WTC11 (cell line): ENCODE measurements at regions of chr11 and their contacts with region 1.

Region 1: GRCh38 chr11:25981998-25982397 is 349.9 kb upstream of the ANO3 start:
- DNase-seq: no peak
- ATAC-seq: peak; percentile 90
- H3K4me3 Mint-ChIP-seq: no peak overlapping the region
- H3K27ac Mint-ChIP-seq: no peak overlapping the region
- H3K4me1 Mint-ChIP-seq: no peaks in the 10 kb centered on the region
- H3K27me3 Mint-ChIP-seq: no peaks in the 10 kb centered on the region
- CTCF ChIP-seq: peak; percentile 31; the same call in 1 of the 2 replicates

Region 2: DNA sequence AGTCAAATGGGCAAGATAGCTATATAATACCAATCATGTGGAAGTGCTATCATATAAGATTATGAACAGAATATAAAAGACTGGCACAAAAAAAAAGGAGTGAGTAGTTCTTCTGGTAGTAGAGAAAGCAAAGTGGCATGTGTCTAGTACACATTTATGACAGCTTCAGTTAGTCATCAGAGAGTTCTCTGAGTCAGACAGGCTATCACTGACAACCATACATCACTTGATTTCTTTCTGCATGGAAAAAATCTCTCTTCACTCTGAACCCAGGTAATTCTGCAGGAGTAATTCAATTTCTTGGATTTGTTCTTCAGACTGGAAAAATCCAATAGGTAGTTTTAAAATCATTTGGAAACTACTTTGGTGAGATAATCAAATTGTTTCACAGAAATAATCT is 63.1 kb after region 1 on chr11:
- CTCF ChIA-PET with region 1: no interaction called
- POLR2A ChIA-PET with region 1: no interaction called
- DNase-seq: no peak
- ATAC-seq: no peak
- H3K4me3 Mint-ChIP-seq: no peak overlapping the region
- H3K27ac Mint-ChIP-seq: no peak overlapping the region
- H3K4me1 Mint-ChIP-seq: peaks cover 2% of the 10 kb centered on the region; the same call in 1 of the 2 replicates
- H3K27me3 Mint-ChIP-seq: no peaks in the 10 kb centered on the region
- CTCF ChIP-seq: no peak

Region 3: GRCh38 chr11:26134481-26135355 is 152.7 kb after region 1 on chr11:
- CTCF ChIA-PET with region 1: interaction called, 33 read pairs
- POLR2A ChIA-PET with region 1: interaction called, 4 read pairs
- DNase-seq: no peak
- ATAC-seq: peak; percentile 97
- H3K4me3 Mint-ChIP-seq: no peak overlapping the region
- H3K27ac Mint-ChIP-seq: no peak overlapping the region; the same call in 1 of the 2 replicates
- H3K4me1 Mint-ChIP-seq: peaks cover 8% of the 10 kb centered on the region
- H3K27me3 Mint-ChIP-seq: no peaks in the 10 kb centered on the region
- CTCF ChIP-seq: no peak

Region 4: GRCh38 chr11:26219183-26220117 is 237.5 kb after region 1 on chr11:
- CTCF ChIA-PET with region 1: interaction called, 21 read pairs
- POLR2A ChIA-PET with region 1: no interaction called
- DNase-seq: no peak
- ATAC-seq: no peak
- H3K4me3 Mint-ChIP-seq: no peak overlapping the region
- H3K27ac Mint-ChIP-seq: no peak overlapping the region
- H3K4me1 Mint-ChIP-seq: no peaks in the 10 kb centered on the region
- H3K27me3 Mint-ChIP-seq: no peaks in the 10 kb centered on the region
- CTCF ChIP-seq: no peak

Region 5: GRCh38 chr11:26268980-26269660 is 287.1 kb after region 1 on chr11:
- CTCF ChIA-PET with region 1: interaction called, 12 read pairs
- POLR2A ChIA-PET with region 1: no interaction called
- DNase-seq: no peak
- ATAC-seq: peak; percentile 47
- H3K4me3 Mint-ChIP-seq: no peak overlapping the region
- H3K27ac Mint-ChIP-seq: no peak overlapping the region
- H3K4me1 Mint-ChIP-seq: peaks cover 12% of the 10 kb centered on the region
- H3K27me3 Mint-ChIP-seq: no peaks in the 10 kb centered on the region
- CTCF ChIP-seq: no peak

Region 6: GRCh38 chr11:26283852-26284408 is 301.9 kb after region 1 on chr11:
- CTCF ChIA-PET with region 1: interaction called, 16 read pairs
- POLR2A ChIA-PET with region 1: no interaction called
- DNase-seq: no peak
- ATAC-seq: peak; percentile 60
- H3K4me3 Mint-ChIP-seq: peak overlapping the region; percentile 81
- H3K27ac Mint-ChIP-seq: no peak overlapping the region
- H3K4me1 Mint-ChIP-seq: peaks cover 8% of the 10 kb centered on the region
- H3K27me3 Mint-ChIP-seq: no peaks in the 10 kb centered on the region
- CTCF ChIP-seq: no peak